GM13976 (cell line): ENCODE measurements at regions of chr1 and their contacts with region 1.

Region 1: DNA sequence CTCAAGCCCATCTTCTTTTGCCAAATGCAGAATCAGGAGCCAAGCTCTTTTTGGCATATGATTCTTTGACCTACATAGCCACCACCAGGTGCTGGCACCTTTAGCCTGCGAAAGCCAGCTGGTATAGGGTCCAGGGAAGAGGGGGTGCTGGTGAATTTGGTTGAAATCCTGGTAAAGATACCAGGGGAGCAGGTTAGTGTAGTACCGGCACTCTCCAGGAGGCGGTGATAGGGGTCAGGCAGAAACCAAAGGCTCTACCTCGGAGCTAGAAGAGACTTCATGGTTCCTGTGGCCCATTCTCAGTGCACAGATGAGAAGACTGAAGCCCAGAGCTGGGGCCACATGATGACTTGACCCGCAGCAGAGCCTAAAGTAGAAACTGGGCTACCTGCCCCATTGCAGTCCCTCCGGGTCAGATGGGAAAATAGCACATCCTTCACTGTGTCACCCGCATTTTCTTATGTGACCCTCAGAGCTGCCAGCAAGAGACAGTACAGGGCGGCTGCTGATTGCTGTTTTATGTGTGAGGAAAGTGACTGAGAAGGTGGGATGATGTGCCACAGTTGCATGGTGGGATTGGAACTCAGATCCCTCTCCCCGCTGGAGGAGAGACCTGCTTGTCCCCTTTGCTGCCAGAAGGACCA is 36.0 kb upstream of the IL19 start:
- DNase-seq: peak; percentile 80
- CTCF ChIP-seq: peak; percentile 75

Region 2: GRCh38 chr1:206612129-206612876 is 122.3 kb before region 1 on chr1 and contains the start of gene EIF2D:
- in situ Hi-C with region 1: no loop called
- DNase-seq: peak; percentile 100
- CTCF ChIP-seq: peak; percentile 98

Region 3: GRCh38 chr1:206809504-206810084 is 75.0 kb after region 1 on chr1:
- in situ Hi-C with region 1: loop called (anchors 5 kb)
- DNase-seq: no peak
- CTCF ChIP-seq: peak; percentile 37

Region 4: GRCh38 chr1:206912445-206913095 is 177.9 kb after region 1 on chr1:
- in situ Hi-C with region 1: loop called (anchors 5 kb)
- DNase-seq: peak; percentile 74
- CTCF ChIP-seq: peak; percentile 71

Region 5: GRCh38 chr1:206982216-206982615 is 247.6 kb after region 1 on chr1:
- in situ Hi-C with region 1: loop called (anchors 5 kb)
- DNase-seq: peak; percentile 72
- CTCF ChIP-seq: peak; percentile 79